Heart left ventricle (tissue), 16 donors: ENCODE measurements at regions of chr14 and their contacts with region 1.

Region 1: GRCh38 chr14:68283378-68284123 is 464.0 kb downstream of the RAD51B start:
- DNase-seq: peak in 4 of 5 donors; percentile 38 to 69 (median 42)
- ATAC-seq: peak; percentile 36 to 68 (median 48)
- H3K4me3 ChIP-seq: no peak overlapping the region
- H3K27ac ChIP-seq: peak overlapping the region in 9 of 12 donors; percentile 0 to 82 (median 40)
- H3K4me1 ChIP-seq: peaks cover 0 to 63% (median 9%) of the 10 kb centered on the region in 12 donors
- H3K27me3 ChIP-seq: no peaks in the 10 kb centered on the region
- CTCF ChIP-seq: no peak
- POLR2A ChIP-seq: no peak

Region 2: GRCh38 chr14:68011406-68012028 is 272.0 kb before region 1 on chr14:
- intact Hi-C with region 1: no loop called
- DNase-seq: no peak
- ATAC-seq: peak in 3 of 4 donors; percentile 44 to 63 (median 58)
- H3K4me3 ChIP-seq: peak overlapping the region in 1 of 12 donors; percentile 23
- H3K27ac ChIP-seq: peak overlapping the region in 7 of 12 donors; percentile 1 to 71 (median 28)
- H3K4me1 ChIP-seq: peaks cover 0 to 11% (median 3%) of the 10 kb centered on the region in 12 donors
- H3K27me3 ChIP-seq: no peaks in the 10 kb centered on the region
- CTCF ChIP-seq: no peak
- POLR2A ChIP-seq: no peak

Region 3: GRCh38 chr14:68084256-68084655 is 199.3 kb before region 1 on chr14:
- intact Hi-C with region 1: no loop called
- DNase-seq: no peak
- ATAC-seq: no peak
- H3K4me3 ChIP-seq: no peak overlapping the region
- H3K27ac ChIP-seq: no peak overlapping the region
- H3K4me1 ChIP-seq: peaks cover 0 to 4% (median 0%) of the 10 kb centered on the region in 12 donors
- H3K27me3 ChIP-seq: no peaks in the 10 kb centered on the region
- CTCF ChIP-seq: no peak
- POLR2A ChIP-seq: no peak

Region 4: GRCh38 chr14:68363843-68364767 is 80.6 kb after region 1 on chr14:
- intact Hi-C with region 1: no loop called
- DNase-seq: peak; percentile 44 to 85 (median 61)
- ATAC-seq: peak; percentile 40 to 61 (median 53)
- H3K4me3 ChIP-seq: no peak overlapping the region
- H3K27ac ChIP-seq: peak overlapping the region in 11 of 12 donors; percentile 18 to 85 (median 63)
- H3K4me1 ChIP-seq: peaks cover 0 to 93% (median 14%) of the 10 kb centered on the region in 12 donors
- H3K27me3 ChIP-seq: no peaks in the 10 kb centered on the region
- CTCF ChIP-seq: no peak
- POLR2A ChIP-seq: no peak

Region 5: DNA sequence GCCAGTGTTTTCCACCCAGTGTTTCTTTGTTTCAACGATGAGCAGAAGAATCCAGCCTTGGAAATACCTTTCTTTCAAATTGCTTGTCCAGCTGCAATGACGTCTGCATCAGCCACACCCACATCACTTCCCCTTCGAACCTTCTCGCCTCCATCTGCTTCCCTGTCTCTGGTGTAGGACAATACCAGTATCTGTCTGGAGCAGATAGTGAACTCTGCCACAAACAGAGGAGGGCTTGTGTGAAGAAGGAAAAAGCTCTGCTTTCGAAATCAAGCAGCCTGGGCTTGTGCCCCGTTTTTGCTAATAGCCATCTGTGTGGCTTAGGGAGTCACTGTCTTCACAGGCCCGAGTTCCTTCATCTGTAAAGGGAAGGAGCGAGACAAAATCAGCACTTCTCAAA is 93.9 kb after region 1 on chr14:
- intact Hi-C with region 1: loop called in 1 of 10 experiments (anchors 10 kb)
- DNase-seq: peak; percentile 56 to 80 (median 74)
- ATAC-seq: peak; percentile 68 to 95 (median 92)
- H3K4me3 ChIP-seq: no peak overlapping the region
- H3K27ac ChIP-seq: peak overlapping the region; percentile 33 to 88 (median 77)
- H3K4me1 ChIP-seq: peaks cover 0 to 77% (median 23%) of the 10 kb centered on the region in 12 donors
- H3K27me3 ChIP-seq: no peaks in the 10 kb centered on the region
- CTCF ChIP-seq: no peak
- POLR2A ChIP-seq: no peak